Right cardiac atrium (tissue), 5 donors: ENCODE measurements at regions of chr11 and their contacts with region 1.

Region 1: GRCh38 chr11:67353317-67354074 is at the start of gene POLD4:
- DNase-seq: peak; percentile 99 to 100 (median 100)
- ATAC-seq: peak; percentile 91 to 93
- H3K4me3 ChIP-seq: peak within 1 kb of the TSS; percentile 62
- H3K27ac ChIP-seq: peak within 1 kb of the TSS; percentile 97
- H3K4me1 ChIP-seq: peaks cover 29% of the 10 kb centered on the region
- H3K27me3 ChIP-seq: no peaks in the 10 kb centered on the region
- total RNA-seq, gene POLD4: 53.8 to 86.6 (median 65.3) TPM

Region 2: DNA sequence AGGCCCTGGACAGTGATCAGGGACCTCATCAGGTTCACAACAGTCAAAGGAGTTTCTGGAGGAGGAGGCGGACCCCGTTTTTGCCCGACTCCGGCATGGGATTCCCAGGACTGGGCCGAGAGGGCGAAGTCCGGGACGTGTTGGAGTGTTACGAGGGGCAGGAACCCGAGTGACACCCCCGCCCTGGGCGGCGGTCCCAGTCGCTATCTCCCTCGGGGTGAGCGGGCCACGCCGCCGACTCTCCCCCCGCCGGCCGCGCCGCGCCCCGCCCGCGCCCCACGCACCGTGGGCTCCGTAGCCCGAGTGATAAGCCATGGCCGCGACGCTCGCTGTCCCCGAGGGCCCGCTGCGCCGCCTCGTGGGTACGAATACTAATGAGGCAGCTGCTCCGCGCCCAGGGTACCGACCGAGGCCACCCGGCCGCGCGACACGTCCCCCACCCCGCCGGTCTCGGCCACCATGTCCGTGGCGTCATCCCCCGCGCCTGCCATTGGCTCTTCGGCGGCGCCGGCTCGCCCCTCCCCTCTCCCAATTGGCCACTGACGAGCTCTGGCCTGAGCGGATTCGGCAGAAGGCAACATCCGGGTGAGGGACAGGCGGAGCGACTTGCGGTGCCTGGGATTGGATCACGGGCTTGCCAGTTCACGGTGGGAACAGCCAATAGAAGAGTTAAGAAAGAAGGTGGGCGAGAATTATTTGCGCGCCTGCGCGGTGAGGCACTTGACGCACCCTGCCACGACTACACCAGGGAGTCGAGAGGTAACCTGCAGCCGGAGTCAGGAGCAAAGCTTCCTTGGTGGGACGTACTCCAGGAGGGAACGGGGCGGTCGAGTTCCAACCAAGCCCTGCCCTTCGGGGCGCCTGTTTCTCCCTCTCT is 1064.6 kb before region 1 on chr11 and contains the start of gene YIF1A:
- intact Hi-C with region 1: no loop called
- DNase-seq: peak; percentile 99 to 100 (median 99)
- ATAC-seq: peak; percentile 96
- H3K4me3 ChIP-seq: peak within 1 kb of the TSS; percentile 63
- H3K27ac ChIP-seq: peak within 1 kb of the TSS; percentile 76
- H3K4me1 ChIP-seq: peaks cover 10% of the 10 kb centered on the region
- H3K27me3 ChIP-seq: no peaks in the 10 kb centered on the region
- total RNA-seq, gene YIF1A: 48.0 to 65.3 (median 50.5) TPM

Region 3: DNA sequence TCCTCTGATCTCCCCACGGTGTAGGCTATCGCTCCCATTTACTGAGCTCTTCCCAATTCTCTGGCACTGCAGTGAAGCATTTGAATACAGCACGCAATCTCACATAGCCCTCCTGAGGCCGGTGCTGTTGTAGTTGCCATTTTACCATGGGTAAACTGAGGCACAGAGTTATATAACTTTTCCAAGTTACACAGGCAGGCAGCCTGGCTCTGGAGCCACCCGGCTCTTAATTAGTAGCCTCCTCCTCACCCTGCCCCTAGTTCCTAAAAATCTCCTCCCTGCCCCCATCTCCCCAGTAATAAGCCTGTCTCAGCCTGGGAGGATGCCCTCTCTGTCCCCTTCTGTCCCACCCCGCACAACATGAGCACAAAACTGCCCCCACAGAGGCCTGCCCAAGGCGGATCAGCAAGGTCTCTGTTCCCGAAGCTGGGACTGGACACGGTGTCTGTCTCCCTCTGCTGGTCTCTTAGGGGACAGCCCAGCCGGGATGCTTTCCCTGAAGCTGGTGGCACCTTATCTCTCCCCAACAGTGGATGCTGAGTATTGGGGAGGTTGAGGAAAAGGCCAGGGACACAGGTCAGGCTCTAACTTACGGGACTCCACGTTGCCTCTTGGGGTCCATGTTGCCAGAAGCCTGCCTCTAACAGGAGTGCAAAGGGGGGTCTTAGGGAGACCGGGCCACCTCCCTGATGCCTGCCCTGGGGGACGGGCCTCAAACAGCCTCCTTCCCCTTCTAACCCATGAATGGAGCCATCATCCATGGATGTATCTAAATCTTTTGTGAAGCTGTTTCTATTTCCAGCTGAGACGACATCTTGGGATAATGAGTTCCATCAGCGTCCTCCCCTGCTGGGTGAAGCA is 29.0 kb after region 1 on chr11:
- intact Hi-C with region 1: loop called in 2 of 4 experiments (anchors 2 to 5 kb)
- DNase-seq: peak; percentile 81 to 92 (median 90)
- ATAC-seq: peak; percentile 78 to 85
- H3K4me3 ChIP-seq: no peak overlapping the region
- H3K27ac ChIP-seq: no peak overlapping the region
- H3K4me1 ChIP-seq: no peaks in the 10 kb centered on the region
- H3K27me3 ChIP-seq: no peaks in the 10 kb centered on the region

Region 4: GRCh38 chr11:67391304-67392132 is 38.0 kb after region 1 on chr11 and contains the start of gene RAD9A:
- intact Hi-C with region 1: loop called in 1 of 4 experiments (anchors 5 kb)
- DNase-seq: peak; percentile 96 to 99 (median 98)
- ATAC-seq: peak; percentile 88 to 90
- H3K4me3 ChIP-seq: peak within 1 kb of the TSS; percentile 73
- H3K27ac ChIP-seq: peak within 1 kb of the TSS; percentile 44
- H3K4me1 ChIP-seq: peaks cover 2% of the 10 kb centered on the region
- H3K27me3 ChIP-seq: no peaks in the 10 kb centered on the region
- total RNA-seq, gene RAD9A: 7.9 to 11.7 (median 9.4) TPM

Region 5: GRCh38 chr11:67523556-67524479 is 170.3 kb after region 1 on chr11:
- intact Hi-C with region 1: no loop called
- DNase-seq: peak in 1 of 3 donors; percentile 44
- ATAC-seq: no peak
- H3K4me3 ChIP-seq: no peak overlapping the region
- H3K27ac ChIP-seq: no peak overlapping the region
- H3K4me1 ChIP-seq: no peaks in the 10 kb centered on the region
- H3K27me3 ChIP-seq: no peaks in the 10 kb centered on the region